ENCODE measurements at regions of chr22 and their contacts with region 1.

Region 1: GRCh38 chr22:24189249-24190158 is 8.2 kb downstream of the SUSD2 start:
- DNase-seq: peak; percentile 74
- ATAC-seq: peak; percentile 92
- H3K4me3 Mint-ChIP-seq: no peak overlapping the region
- H3K27ac Mint-ChIP-seq: no peak overlapping the region
- H3K4me1 Mint-ChIP-seq: no peaks in the 10 kb centered on the region
- H3K27me3 Mint-ChIP-seq: no peaks in the 10 kb centered on the region

Region 2: DNA sequence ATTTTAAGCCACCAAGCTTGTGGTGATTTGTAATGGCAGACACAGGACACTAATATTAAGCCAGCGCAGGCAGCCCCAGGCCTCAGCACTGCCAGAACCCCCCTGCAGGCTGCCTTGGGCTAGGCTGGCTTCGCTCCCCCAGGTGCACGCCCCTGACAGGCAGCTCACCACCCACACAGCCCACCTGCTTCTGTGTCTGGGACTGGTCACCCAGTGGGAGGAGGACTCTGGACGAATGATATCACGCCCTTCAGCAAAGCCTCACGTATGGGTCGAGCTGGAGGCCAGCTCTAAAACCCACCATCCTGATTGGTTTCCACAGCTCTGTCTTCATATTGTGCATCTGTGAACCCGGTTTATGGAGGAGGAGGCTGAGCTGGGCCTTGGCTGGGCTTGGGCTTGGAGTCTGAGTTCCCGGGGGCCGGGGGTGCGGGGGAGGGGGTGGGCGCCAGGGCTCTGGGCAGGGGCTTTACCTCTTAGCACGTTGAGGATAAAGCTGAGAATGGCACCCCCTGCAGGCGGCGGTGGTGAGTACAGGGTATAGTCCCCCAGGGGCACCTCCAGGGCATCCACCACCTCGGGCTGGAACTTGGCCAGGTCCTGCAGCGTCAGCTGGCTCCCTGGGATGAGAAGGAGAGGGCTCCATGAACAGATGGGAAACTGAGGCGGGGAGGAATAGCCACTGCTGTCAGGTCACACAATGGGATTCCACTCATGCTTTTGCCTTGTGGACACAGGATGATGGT is 41.6 kb after region 1 on chr22:
- CTCF ChIA-PET with region 1: interaction called, 4 read pairs
- POLR2A ChIA-PET with region 1: no interaction called
- intact Hi-C with region 1: loop called in 1 of 2 experiments (anchors 5 kb)
- DNase-seq: peak; percentile 85
- ATAC-seq: peak; percentile 91
- H3K4me3 Mint-ChIP-seq: peak overlapping the region; percentile 19
- H3K27ac Mint-ChIP-seq: peak overlapping the region; percentile 42
- H3K4me1 Mint-ChIP-seq: peaks cover 2% of the 10 kb centered on the region
- H3K27me3 Mint-ChIP-seq: no peaks in the 10 kb centered on the region

Region 3: DNA sequence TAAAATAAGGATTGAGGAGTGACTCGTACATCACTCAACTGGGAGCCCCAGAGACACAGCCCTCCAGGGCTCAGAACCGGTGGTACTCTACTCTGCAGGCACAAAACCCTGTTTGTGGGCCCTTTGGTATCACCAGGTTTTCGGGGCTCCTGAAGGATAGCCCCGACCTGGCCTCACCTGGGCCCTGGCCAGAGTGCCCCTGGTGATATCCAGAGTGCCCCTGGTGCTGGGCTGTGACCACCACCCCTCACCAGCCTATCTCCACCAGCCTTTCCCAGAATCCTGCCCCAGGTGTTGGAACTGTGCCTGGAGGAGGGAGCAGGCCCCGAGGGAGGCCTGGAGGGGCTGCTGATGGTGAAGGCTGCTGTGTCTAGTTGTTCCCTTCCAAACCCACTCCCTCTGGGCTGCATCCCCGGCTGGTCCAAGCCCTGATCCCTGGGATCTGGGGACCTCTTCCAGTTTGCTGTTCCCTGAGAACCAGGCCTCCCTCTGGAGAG is 57.6 kb after region 1 on chr22:
- CTCF ChIA-PET with region 1: no interaction called
- POLR2A ChIA-PET with region 1: no interaction called
- intact Hi-C with region 1: loop called in 1 of 2 experiments (anchors 1 kb)
- DNase-seq: no peak
- ATAC-seq: no peak
- H3K4me3 Mint-ChIP-seq: no peak overlapping the region
- H3K27ac Mint-ChIP-seq: no peak overlapping the region
- H3K4me1 Mint-ChIP-seq: peaks cover 24% of the 10 kb centered on the region
- H3K27me3 Mint-ChIP-seq: no peaks in the 10 kb centered on the region

Measured in activated CD4-positive, alpha-beta T cell treated with anti-CD3 and anti-CD28 coated beads for 36 hours (primary cell).